ENCODE measurements at regions of chr21 and their contacts with region 1.

Region 1: DNA sequence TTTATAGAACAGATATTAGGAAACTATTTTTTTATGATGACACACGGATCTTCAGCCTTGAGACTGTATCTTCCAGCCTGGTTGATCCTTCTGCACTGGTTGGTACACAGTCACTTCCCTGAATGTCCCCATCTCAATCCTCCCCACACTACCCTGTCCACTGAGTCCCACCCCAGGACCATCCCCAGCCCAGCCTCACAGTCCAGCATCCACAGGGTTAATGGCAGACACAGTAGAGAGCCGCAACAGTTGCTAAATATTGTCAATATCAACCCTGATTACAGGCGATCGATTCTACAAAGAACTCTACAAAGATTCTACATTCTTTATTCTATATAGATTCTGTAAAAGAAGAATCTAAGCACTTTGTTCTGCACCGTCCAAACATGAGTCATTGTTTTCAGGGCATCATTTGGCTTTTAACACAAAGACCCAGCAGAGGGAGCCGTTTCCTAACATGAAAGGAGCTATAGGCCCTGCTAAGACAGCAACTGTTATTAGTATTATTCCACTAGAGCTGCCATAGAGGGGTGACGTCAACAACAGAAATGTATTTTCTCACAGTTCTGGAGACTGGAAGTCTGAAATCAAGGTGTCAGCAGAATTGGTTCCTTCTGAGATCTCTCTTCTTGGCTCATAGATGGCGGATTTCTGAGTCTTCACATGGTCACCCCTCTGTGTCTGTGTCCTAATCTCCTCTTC is 30.1 kb upstream of the IFNAR2 start:
- DNase-seq: peak; percentile 57 to 90 (median 71)
- H3K4me3 ChIP-seq: no peak overlapping the region
- H3K27ac ChIP-seq: peak overlapping the region in 1 of 2 donors; percentile 19
- H3K4me1 ChIP-seq: peaks cover 2% of the 10 kb centered on the region
- H3K27me3 ChIP-seq: no peaks in the 10 kb centered on the region
- CTCF ChIP-seq: peak; percentile 44 to 81 (median 75)
- EP300 ChIP-seq: no peak
- POLR2A ChIP-seq: no peak

Region 2: GRCh38 chr21:32562426-32562825 is 637.2 kb before region 1 on chr21:
- intact Hi-C with region 1: no loop called
- DNase-seq: peak; percentile 55 to 73 (median 63)
- H3K4me3 ChIP-seq: no peak overlapping the region
- H3K27ac ChIP-seq: peak overlapping the region in 1 of 2 donors; percentile 28
- H3K4me1 ChIP-seq: peaks cover 1% of the 10 kb centered on the region
- H3K27me3 ChIP-seq: no peaks in the 10 kb centered on the region
- CTCF ChIP-seq: peak in 2 of 3 donors; percentile 46 to 55
- EP300 ChIP-seq: no peak
- POLR2A ChIP-seq: no peak

Region 3: DNA sequence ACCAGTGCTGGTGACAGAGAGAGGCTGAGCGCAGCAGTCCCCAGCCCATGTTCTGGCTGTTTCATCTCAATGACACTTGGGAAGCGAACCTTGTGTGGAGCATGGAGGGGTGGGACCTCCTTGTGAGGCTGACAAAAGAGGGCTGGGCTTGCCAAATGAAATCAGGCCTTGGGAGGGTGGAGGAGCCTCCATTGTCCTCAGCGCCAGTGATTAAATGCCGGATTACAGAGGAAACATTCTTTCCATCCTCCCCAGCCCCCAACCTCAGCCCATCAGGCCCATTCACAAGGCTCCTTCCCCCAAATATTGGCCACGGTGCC is 364.8 kb before region 1 on chr21:
- intact Hi-C with region 1: loop called in 1 of 4 experiments (anchors 5 kb)
- DNase-seq: no peak
- H3K4me3 ChIP-seq: no peak overlapping the region
- H3K27ac ChIP-seq: no peak overlapping the region
- H3K4me1 ChIP-seq: no peaks in the 10 kb centered on the region
- H3K27me3 ChIP-seq: no peaks in the 10 kb centered on the region
- CTCF ChIP-seq: no peak
- EP300 ChIP-seq: no peak
- POLR2A ChIP-seq: no peak

Region 4: GRCh38 chr21:32908534-32908933 is 291.1 kb before region 1 on chr21:
- intact Hi-C with region 1: no loop called
- DNase-seq: no peak
- H3K4me3 ChIP-seq: no peak overlapping the region
- H3K27ac ChIP-seq: no peak overlapping the region
- H3K4me1 ChIP-seq: no peaks in the 10 kb centered on the region
- H3K27me3 ChIP-seq: no peaks in the 10 kb centered on the region
- CTCF ChIP-seq: no peak
- EP300 ChIP-seq: no peak
- POLR2A ChIP-seq: no peak

Region 5: DNA sequence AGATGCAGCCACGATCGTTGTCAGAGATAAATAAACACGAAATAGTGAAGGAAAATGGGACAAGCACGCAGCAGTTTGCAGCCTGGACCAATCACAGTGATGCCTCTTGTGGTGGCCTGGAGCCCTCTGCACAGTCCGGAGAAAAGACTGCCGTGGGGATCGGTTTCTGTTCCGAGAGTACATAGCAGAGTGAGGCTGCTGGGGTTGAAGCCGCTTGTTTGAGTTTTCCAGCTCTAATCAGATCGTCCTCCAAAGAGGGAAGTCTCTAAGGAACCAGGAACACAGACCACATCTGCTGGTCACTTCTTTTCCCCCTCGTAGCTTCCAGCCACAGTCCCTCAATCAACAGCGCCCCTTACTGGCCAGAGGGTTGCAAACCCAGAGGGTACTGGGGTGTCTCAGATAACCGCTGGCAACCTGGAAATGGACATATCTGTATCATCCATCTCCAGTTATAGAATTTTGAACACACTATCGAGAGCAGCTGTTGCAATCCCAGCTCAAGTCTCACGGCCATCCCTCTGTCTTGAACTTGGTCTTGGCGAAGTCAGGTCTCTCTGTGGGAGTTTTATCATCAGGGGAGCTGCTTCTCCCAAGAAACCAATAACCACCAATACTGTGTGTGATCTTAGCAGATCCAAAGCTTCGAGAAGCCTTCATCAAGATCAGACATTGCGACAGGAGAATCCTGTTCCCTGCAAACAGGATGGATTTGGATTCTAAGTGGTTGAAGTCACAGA is 72.3 kb before region 1 on chr21:
- intact Hi-C with region 1: no loop called
- DNase-seq: peak in 4 of 5 donors; percentile 9 to 55 (median 24)
- H3K4me3 ChIP-seq: no peak overlapping the region
- H3K27ac ChIP-seq: no peak overlapping the region
- H3K4me1 ChIP-seq: no peaks in the 10 kb centered on the region
- H3K27me3 ChIP-seq: no peaks in the 10 kb centered on the region
- CTCF ChIP-seq: peak in 1 of 3 donors; percentile 17
- EP300 ChIP-seq: no peak
- POLR2A ChIP-seq: no peak

Region 6: DNA sequence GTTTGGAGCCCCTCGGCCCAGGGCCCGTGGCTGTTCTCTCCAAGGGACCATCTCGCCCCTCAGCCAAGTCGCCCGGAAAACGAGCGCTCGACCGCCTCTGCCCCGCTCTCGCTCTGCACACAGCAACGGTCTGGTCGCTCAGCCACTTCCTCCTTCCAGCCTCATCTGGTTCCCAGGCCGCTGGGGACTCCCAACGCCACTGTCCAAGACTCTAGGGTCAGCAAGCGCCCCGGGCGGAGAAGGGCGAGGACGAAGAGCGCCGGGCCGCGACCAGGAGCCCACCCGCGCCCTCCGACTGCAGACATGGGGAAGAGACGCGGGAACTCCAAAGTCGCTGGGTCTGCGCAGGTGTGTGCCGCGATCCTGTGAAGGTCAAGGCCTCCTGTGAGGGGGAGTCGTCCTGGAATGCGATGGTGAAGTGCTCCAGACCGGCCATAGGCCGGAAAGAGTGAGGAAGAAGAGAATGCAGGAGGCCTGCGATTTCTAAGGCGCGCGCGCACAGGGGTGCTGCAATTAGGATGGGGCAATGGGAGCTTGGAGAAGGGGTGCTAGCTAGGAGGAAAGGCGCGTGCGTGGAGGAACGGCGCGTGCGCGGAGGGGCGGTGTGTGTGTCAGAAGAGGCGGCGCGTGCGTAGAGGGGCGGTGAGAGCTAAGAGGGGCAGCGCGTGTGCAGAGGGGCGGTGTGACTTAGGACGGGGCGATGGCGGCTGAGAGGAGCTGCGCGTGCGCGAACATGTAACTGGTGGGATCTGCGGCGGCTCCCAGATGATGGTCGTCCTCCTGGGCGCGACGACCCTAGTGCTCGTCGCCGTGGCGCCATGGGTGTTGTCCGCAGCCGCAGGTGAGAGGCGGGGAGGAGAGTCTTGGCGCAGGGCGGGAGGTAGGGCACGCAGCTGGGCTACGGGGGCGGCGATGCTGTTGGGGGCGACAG is 124.9 kb after region 1 on chr21 and contains the start of gene IFNAR1:
- intact Hi-C with region 1: loop called in 1 of 4 experiments (anchors 10 kb)
- DNase-seq: peak; percentile 97 to 100 (median 99)
- H3K4me3 ChIP-seq: peak within 1 kb of the TSS; percentile 88
- H3K27ac ChIP-seq: peak within 1 kb of the TSS; percentile 93 to 95
- H3K4me1 ChIP-seq: peaks cover 8% of the 10 kb centered on the region
- H3K27me3 ChIP-seq: no peaks in the 10 kb centered on the region
- CTCF ChIP-seq: no peak
- EP300 ChIP-seq: no peak
- POLR2A ChIP-seq: peak; percentile 73
- total RNA-seq, gene IFNAR1: 20.6 to 47.9 (median 35.1) TPM

Region 7: GRCh38 chr21:33360881-33361602 is 161.4 kb after region 1 on chr21:
- intact Hi-C with region 1: loop called in 1 of 4 experiments (anchors 5 kb)
- DNase-seq: peak; percentile 66 to 83 (median 76)
- H3K4me3 ChIP-seq: no peak overlapping the region
- H3K27ac ChIP-seq: peak overlapping the region; percentile 4 to 43
- H3K4me1 ChIP-seq: peaks cover 4% of the 10 kb centered on the region
- H3K27me3 ChIP-seq: no peaks in the 10 kb centered on the region
- CTCF ChIP-seq: peak; percentile 53 to 62 (median 60)
- EP300 ChIP-seq: no peak
- POLR2A ChIP-seq: no peak

Region 8: GRCh38 chr21:33374450-33375096 is 174.9 kb after region 1 on chr21:
- intact Hi-C with region 1: loop called in 1 of 4 experiments (anchors 10 kb)
- DNase-seq: peak in 3 of 5 donors; percentile 44 to 53 (median 47)
- H3K4me3 ChIP-seq: no peak overlapping the region
- H3K27ac ChIP-seq: no peak overlapping the region
- H3K4me1 ChIP-seq: peaks cover 1% of the 10 kb centered on the region
- H3K27me3 ChIP-seq: no peaks in the 10 kb centered on the region
- CTCF ChIP-seq: peak in 1 of 3 donors; percentile 20
- EP300 ChIP-seq: no peak
- POLR2A ChIP-seq: no peak

Region 9: DNA sequence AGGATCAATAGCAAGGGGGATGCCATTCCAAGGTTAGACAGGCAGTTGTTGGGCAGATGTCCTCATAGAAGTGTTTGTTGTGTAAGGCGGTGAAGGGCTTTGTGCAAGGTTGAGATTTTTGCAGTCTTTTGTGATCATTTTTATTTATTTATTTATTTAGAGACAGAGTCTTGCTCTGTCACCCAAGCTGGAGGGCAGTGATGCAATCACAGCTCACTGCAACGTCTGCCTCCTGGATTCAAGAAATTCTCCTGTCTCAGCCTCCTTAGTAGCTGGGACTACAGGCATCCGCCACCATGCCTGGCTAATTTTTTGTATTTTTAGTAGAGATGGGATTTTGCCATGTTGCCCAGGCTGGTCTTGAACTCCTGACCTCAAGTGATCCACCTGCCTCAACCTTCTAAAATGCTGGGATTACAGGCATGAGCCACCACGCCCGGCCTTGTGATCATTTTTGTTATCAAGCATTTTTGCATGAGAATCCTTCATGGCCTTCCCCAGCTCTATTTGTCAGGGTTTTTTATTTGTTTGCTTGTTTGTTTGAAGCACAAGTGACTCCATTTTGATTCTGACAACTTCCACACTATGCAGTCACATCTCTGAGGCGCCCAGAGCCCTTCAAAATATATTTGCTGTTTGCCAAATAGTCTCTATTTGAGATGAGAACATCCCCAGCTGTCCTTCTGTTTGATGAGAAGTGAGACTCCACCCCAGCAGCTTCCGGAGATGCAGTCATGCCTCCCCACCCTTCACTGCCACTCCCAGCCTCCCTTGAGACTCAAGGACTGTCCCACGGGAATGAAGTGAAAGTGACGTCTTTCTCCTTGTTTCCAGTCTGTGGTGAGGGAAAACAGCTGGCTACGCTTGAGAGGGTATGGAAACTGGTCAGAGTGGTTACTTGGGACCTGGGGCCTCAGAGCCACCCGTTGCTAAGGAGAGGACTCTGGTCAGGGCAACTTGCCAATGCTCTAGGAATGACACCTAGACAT is 242.1 kb after region 1 on chr21:
- intact Hi-C with region 1: loop called (anchors 2 to 10 kb)
- DNase-seq: peak in 1 of 5 donors; percentile 13
- H3K4me3 ChIP-seq: no peak overlapping the region
- H3K27ac ChIP-seq: no peak overlapping the region
- H3K4me1 ChIP-seq: peaks cover 3% of the 10 kb centered on the region
- H3K27me3 ChIP-seq: no peaks in the 10 kb centered on the region
- CTCF ChIP-seq: no peak
- EP300 ChIP-seq: no peak
- POLR2A ChIP-seq: no peak

Region 10: DNA sequence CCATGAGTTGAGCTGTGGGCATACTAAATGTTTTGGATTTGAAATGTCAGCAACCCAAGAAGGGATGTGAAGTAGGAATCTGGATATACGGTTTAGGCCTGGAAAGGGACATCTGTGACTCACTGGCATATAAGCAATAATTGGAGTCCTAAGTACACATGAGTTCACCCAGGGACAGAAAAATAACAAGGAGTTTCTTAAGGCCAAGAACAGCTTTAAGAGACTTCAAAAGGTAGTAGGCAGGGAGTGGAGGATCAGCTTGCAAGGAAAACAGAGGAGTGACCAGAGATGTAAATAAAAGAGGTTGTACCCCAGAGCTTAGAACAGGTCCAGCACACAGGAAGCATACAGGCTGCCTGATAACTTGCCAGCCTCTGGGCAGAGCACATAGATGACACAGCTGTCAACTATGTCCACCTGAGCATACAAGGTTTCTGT is 252.0 kb after region 1 on chr21:
- intact Hi-C with region 1: loop called in 3 of 4 experiments (anchors 5 to 10 kb)
- DNase-seq: no peak
- H3K4me3 ChIP-seq: no peak overlapping the region
- H3K27ac ChIP-seq: no peak overlapping the region
- H3K4me1 ChIP-seq: no peaks in the 10 kb centered on the region
- H3K27me3 ChIP-seq: no peaks in the 10 kb centered on the region
- CTCF ChIP-seq: no peak
- EP300 ChIP-seq: no peak
- POLR2A ChIP-seq: no peak

Region 11: DNA sequence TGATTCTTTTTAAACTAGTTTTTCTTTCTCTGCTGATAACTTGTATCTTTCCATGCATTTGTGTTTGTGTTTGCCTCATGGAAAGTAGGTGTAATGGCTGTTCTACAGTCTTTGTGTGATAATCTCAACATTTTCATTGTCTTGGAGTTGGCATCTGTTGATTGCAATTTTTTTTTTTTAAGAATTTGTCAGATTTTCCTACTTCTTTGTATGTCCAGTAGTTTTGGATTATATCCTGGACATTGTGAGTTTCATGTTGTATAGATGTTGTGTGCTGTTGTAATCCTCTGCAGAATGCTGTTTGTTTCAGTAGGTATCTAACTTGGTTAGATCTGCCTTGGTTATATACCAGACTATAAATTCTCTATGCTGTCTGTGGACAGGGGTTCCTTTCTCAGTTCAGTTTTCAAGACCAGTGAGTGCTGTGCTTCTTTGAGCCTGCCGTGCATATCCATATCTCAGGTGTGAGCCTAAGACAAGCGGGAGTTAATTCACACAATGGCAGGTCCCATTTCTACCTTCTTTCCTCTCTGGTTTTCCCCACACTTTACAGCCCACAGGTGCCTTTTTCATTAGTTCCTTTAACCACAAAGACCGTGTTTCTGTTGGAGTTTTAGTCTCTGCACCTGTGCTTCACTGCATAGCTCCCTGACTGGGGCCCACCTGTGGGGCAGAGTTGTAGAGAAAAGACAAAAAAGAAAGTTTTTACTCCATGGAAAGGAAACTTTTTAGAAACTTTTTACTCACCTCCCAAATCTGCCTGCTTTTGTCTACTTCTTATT is 512.5 kb after region 1 on chr21:
- intact Hi-C with region 1: no loop called
- DNase-seq: no peak
- H3K4me3 ChIP-seq: no peak overlapping the region
- H3K27ac ChIP-seq: no peak overlapping the region
- H3K4me1 ChIP-seq: peaks cover 2% of the 10 kb centered on the region
- H3K27me3 ChIP-seq: no peaks in the 10 kb centered on the region
- CTCF ChIP-seq: no peak
- EP300 ChIP-seq: no peak
- POLR2A ChIP-seq: no peak

Measured in ovary (tissue), 10 donors.